ENCODE measurements at regions of chr19 and their contacts with region 1.

Region 1: GRCh38 chr19:45405435-45406225 is 761 bp upstream of the PPP1R13L start:
- DNase-seq: peak; percentile 73 to 85 (median 78)
- H3K4me3 ChIP-seq: peak overlapping the region; percentile 70 to 92 (median 83)
- H3K27ac ChIP-seq: peak overlapping the region; percentile 96 to 99
- H3K4me1 ChIP-seq: peaks cover 5 to 38% (median 38%) of the 10 kb centered on the region in 4 experiments
- H3K27me3 ChIP-seq: peaks cover 0 to 32% (median 21%) of the 10 kb centered on the region in 5 experiments

Region 2: DNA sequence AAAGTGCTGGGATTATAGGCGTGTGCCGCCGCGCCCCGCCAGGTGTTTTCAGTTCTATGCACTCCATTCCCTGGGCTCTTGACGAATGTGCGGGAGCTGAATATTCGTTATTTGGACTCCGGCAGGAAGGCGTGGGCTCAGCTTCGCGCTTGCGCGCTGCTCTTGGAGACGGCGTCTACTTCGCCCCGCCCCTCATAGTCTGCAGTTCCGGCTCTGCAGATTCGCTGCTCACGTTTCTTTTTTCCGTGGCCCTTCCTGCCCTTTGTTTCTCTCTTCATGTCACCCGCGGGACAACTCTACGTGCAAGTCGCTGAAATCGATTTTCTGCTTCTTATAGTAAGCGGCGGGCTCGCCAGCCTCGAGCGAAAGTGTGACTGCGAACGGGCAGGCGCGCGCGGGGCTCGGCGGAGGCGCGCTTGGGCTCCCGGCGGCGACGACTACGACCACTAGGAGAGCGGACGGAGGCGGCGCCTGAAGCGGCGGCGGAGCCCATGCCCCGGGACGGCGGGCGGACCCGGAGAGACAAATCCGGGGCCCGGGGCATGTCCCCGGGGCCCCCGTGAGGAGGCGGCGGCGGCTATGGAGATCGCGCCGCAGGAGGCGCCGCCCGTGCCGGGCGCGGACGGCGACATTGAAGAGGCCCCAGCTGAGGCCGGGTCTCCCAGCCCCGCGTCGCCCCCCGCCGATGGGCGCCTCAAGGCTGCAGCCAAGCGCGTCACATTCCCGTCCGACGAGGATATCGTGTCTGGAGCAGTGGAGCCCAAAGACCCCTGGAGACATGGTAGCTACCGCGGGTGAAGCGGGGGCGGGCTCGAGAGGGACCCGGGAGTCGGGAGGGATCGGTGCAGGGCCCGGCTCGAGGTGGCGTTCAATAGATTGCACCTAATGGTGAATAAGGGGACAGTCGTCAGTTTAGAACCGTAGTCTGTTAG is 312.6 kb before region 1 on chr19 and contains the start of gene PPP1R37:
- CTCF ChIA-PET with region 1: no interaction called
- POLR2A ChIA-PET with region 1: no interaction called
- DNase-seq: peak; percentile 98 to 99 (median 98)
- H3K4me3 ChIP-seq: peak within 1 kb of the TSS; percentile 84 to 97 (median 94)
- H3K27ac ChIP-seq: peak within 1 kb of the TSS; percentile 99
- H3K4me1 ChIP-seq: peaks cover 6 to 40% (median 30%) of the 10 kb centered on the region in 4 experiments
- H3K27me3 ChIP-seq: no peaks in the 10 kb centered on the region

Region 3: DNA sequence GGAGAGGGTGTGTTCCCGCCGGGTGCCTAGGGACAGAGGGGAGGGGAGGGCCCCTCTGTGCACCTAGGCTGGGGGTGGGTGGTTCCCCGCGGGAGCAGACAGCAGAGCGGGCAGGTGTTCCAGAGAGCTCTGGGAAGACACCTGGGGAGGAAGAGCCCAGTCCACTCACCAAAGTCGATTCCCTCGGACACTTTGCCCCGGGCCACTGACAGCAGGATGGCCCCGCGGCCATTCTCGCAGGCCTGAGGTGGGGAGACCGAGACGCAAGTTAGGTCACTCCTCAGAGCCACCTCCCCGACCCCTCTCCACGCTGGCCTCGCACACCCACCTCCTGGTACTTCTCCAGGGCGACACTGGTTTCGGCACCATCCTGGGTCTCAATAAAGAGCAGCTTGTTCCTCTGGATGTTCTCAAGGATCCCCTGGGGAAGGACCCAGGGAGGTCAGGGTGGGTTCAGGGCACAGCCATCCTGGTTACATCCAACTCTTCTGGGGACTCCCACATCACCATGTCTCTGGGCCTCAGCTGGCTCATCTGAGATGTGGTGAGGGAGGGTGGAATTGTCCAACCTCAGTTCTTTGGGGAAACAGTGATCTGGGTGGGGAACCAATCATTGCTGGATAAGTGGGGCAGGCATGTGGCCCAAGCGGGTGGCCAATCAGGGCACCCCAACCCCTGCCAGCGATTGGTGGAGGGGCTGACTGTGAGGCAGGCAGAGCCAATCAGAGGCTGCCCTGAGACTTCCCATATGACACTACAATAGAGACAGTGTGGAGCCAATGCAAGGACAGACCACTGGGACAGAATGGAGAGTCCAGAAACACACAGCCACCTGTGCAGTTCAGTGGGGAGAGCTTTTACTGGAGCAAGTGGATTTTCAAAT is 52.5 kb before region 1 on chr19:
- CTCF ChIA-PET with region 1: no interaction called
- POLR2A ChIA-PET with region 1: no interaction called
- DNase-seq: no peak
- H3K4me3 ChIP-seq: no peak overlapping the region
- H3K27ac ChIP-seq: no peak overlapping the region
- H3K4me1 ChIP-seq: no peaks in the 10 kb centered on the region
- H3K27me3 ChIP-seq: peaks cover 0 to under 1% (median 0%) of the 10 kb centered on the region in 5 experiments

Region 4: GRCh38 chr19:45370410-45371204 is 35.0 kb before region 1 on chr19 and contains the start of gene ERCC2:
- CTCF ChIA-PET with region 1: interaction called, 17 read pairs
- POLR2A ChIA-PET with region 1: no interaction called
- DNase-seq: peak; percentile 98 to 99 (median 98)
- H3K4me3 ChIP-seq: peak within 1 kb of the TSS; percentile 53 to 90 (median 79)
- H3K27ac ChIP-seq: peak within 1 kb of the TSS; percentile 55 to 83
- H3K4me1 ChIP-seq: peaks cover 0 to 10% (median 5%) of the 10 kb centered on the region in 4 experiments
- H3K27me3 ChIP-seq: no peaks in the 10 kb centered on the region

Region 5: DNA sequence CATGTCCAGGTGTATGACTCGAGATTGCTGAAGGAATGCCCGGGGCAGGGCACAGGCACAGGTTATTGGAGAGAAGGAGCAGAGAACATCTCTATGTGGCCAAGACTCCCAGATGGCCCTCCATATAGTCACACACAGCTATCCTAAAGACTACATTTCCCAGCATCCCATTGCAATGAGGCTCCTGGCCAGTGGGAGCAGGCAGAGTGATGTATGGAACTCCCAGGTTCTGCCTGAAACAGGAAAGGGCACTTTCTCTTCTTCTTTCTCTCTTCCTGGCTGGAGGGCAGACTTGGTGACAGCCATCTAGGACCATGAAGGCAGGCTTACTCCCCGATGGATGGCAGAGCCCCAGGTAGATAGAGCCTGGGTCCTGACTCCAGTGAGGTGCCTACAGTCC is 14.3 kb before region 1 on chr19:
- CTCF ChIA-PET with region 1: interaction called, 14 read pairs
- POLR2A ChIA-PET with region 1: no interaction called
- DNase-seq: no peak
- H3K4me3 ChIP-seq: no peak overlapping the region
- H3K27ac ChIP-seq: no peak overlapping the region
- H3K4me1 ChIP-seq: peaks cover 0 to 7% (median under 1%) of the 10 kb centered on the region in 4 experiments
- H3K27me3 ChIP-seq: peaks cover 2 to 32% (median 10%) of the 10 kb centered on the region in 5 experiments

Region 6: GRCh38 chr19:45423589-45424190 is 18.1 kb after region 1 on chr19 and contains the start of gene ERCC1:
- CTCF ChIA-PET with region 1: interaction called, 34 read pairs
- POLR2A ChIA-PET with region 1: no interaction called
- DNase-seq: peak; percentile 75 to 81 (median 77)
- H3K4me3 ChIP-seq: peak within 1 kb of the TSS; percentile 71 to 85 (median 75)
- H3K27ac ChIP-seq: peak within 1 kb of the TSS; percentile 46 to 88
- H3K4me1 ChIP-seq: peaks cover 5 to 69% (median 54%) of the 10 kb centered on the region in 4 experiments
- H3K27me3 ChIP-seq: peaks cover 0 to 4% (median 0%) of the 10 kb centered on the region in 5 experiments

Region 7: GRCh38 chr19:45439569-45440254 is 34.1 kb after region 1 on chr19:
- CTCF ChIA-PET with region 1: interaction called, 11 read pairs
- POLR2A ChIA-PET with region 1: no interaction called
- DNase-seq: peak; percentile 75 to 87 (median 86)
- H3K4me3 ChIP-seq: peak overlapping the region; percentile 50 to 77 (median 66)
- H3K27ac ChIP-seq: peak overlapping the region in 1 of 2 experiments; percentile 43
- H3K4me1 ChIP-seq: peaks cover 0 to 33% (median 26%) of the 10 kb centered on the region in 4 experiments
- H3K27me3 ChIP-seq: peaks cover 0 to 12% (median 0%) of the 10 kb centered on the region in 5 experiments

Region 8: GRCh38 chr19:45451131-45451849 is 45.7 kb after region 1 on chr19:
- CTCF ChIA-PET with region 1: no interaction called
- POLR2A ChIA-PET with region 1: no interaction called
- DNase-seq: peak in 2 of 3 donors; percentile 82 to 89
- H3K4me3 ChIP-seq: peak overlapping the region; percentile 30 to 77 (median 63)
- H3K27ac ChIP-seq: peak overlapping the region; percentile 70 to 89
- H3K4me1 ChIP-seq: peaks cover 4 to 49% (median 40%) of the 10 kb centered on the region in 4 experiments
- H3K27me3 ChIP-seq: peaks cover 0 to 2% (median 0%) of the 10 kb centered on the region in 5 experiments

Region 9: GRCh38 chr19:45478454-45479238 is 73.0 kb after region 1 on chr19:
- CTCF ChIA-PET with region 1: interaction called, 65 read pairs
- POLR2A ChIA-PET with region 1: interaction called, 4 read pairs
- DNase-seq: peak; percentile 90 to 93 (median 93)
- H3K4me3 ChIP-seq: peak overlapping the region; percentile 50 to 98 (median 69)
- H3K27ac ChIP-seq: peak overlapping the region; percentile 99
- H3K4me1 ChIP-seq: peaks cover 5 to 21% (median 11%) of the 10 kb centered on the region in 4 experiments
- H3K27me3 ChIP-seq: peaks cover 0 to 30% (median 12%) of the 10 kb centered on the region in 5 experiments

Region 10: GRCh38 chr19:45485305-45486077 is 79.9 kb after region 1 on chr19:
- CTCF ChIA-PET with region 1: interaction called, 65 read pairs
- POLR2A ChIA-PET with region 1: no interaction called
- DNase-seq: peak; percentile 94 to 96 (median 94)
- H3K4me3 ChIP-seq: peak overlapping the region; percentile 41 to 86 (median 71)
- H3K27ac ChIP-seq: peak overlapping the region in 1 of 2 experiments; percentile 76
- H3K4me1 ChIP-seq: peaks cover 0 to 8% (median 6%) of the 10 kb centered on the region in 4 experiments
- H3K27me3 ChIP-seq: no peaks in the 10 kb centered on the region